ENCODE measurements at regions of chr3 and their contacts with region 1.

Region 1: GRCh38 chr3:138935848-138936740 is 10.8 kb downstream of the FOXL2 start:
- DNase-seq: peak; percentile 69
- H3K4me3 ChIP-seq: peak overlapping the region; percentile 19 to 54 (median 30)
- H3K27ac ChIP-seq: no peak overlapping the region
- H3K4me1 ChIP-seq: peaks cover 16 to 44% (median 31%) of the 10 kb centered on the region in 4 donors
- H3K27me3 ChIP-seq: peaks cover 75% of the 10 kb centered on the region
- CTCF ChIP-seq: peak; percentile 84 to 97 (median 93)
- EP300 ChIP-seq: no peak
- POLR2A ChIP-seq: no peak

Region 2: GRCh38 chr3:138417559-138417982 is 518.5 kb before region 1 on chr3:
- in situ Hi-C with region 1: loop called in 1 of 4 experiments (anchors 25 kb)
- intact Hi-C with region 1: no loop called
- DNase-seq: peak; percentile 76
- H3K4me3 ChIP-seq: no peak overlapping the region
- H3K27ac ChIP-seq: no peak overlapping the region
- H3K4me1 ChIP-seq: no peaks in the 10 kb centered on the region
- H3K27me3 ChIP-seq: peaks cover 4% of the 10 kb centered on the region
- CTCF ChIP-seq: peak; percentile 76 to 92 (median 90)
- EP300 ChIP-seq: no peak
- POLR2A ChIP-seq: no peak

Region 3: DNA sequence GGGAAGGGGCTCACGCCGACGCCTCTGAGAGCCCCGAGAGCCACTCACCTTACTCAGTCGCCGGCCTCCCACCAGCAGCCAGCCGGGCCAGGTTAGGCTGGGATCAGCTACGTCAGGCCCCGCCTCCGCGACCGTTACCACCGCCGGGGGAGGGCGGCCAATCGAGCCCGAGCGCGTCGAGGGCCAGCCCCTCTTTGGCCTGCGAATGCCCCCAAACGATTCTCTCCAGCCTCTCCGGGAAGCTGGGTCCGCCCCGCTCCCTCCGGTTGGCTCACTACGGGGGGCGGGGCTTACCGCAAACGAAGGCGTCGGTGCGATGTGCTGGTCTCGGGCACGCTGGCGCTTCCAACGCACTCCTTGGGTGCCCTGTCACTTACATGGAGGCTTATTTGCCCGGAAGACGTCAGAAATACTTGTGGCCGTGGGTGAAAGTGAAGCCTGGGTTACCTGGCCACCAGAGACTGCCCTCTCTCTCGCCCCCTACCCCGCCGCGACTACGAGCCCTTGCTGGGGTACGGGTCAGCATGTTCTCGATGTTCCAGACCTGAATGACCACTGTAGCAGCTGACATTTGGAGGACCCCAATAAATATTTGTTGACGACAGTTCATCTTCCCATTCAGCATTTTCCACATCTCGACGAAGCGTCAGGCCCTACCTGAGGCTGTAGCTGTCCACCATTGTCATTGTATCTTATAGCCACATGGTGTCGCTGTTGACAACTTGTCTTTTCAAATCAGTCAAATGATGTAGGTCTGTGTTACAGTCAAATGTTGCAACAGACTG is 341.8 kb before region 1 on chr3 and contains the start of gene CEP70:
- in situ Hi-C with region 1: loop called in 1 of 4 experiments (anchors 10 kb)
- intact Hi-C with region 1: no loop called
- DNase-seq: peak; percentile 96
- H3K4me3 ChIP-seq: peak within 1 kb of the TSS; percentile 49 to 75 (median 58)
- H3K27ac ChIP-seq: peak within 1 kb of the TSS; percentile 88 to 95 (median 92)
- H3K4me1 ChIP-seq: peaks cover 6 to 33% (median 15%) of the 10 kb centered on the region in 4 donors
- H3K27me3 ChIP-seq: no peaks in the 10 kb centered on the region
- CTCF ChIP-seq: peak; percentile 87 to 97 (median 89)
- EP300 ChIP-seq: no peak
- POLR2A ChIP-seq: peak; percentile 97
- total RNA-seq, gene CEP70: 4.1 to 46.8 (median 22.6) TPM

Region 4: DNA sequence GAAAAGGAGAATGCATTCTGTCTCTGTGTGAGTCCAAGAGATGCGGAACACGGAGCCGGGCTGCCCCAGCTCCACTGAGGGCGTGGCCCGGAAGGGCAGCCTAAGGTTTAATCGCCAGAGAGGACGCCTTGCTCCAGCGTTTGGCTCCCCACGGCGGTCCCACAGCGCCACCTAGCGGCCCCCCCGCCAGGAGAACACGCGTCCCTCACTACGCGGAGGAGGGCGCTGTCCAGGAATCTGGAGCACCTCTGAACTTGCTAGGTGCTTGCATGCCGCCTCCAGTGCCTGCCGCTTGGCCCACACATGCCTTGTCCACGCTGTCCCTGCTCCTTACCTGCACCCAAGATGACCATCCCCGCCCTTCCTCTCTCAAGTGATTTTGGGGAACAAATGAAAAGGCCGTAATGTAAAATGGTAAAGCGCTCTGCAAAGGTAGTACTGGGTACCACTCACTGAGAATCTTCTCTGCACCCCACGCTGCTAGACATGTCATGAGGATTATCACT is 393.3 kb after region 1 on chr3:
- in situ Hi-C with region 1: loop called (anchors 10 to 25 kb)
- intact Hi-C with region 1: loop called (anchors 10 kb)
- DNase-seq: peak; percentile 92
- H3K4me3 ChIP-seq: peak overlapping the region in 1 of 4 donors; percentile 13
- H3K27ac ChIP-seq: no peak overlapping the region
- H3K4me1 ChIP-seq: peaks cover 0 to 7% (median 2%) of the 10 kb centered on the region in 4 donors
- H3K27me3 ChIP-seq: peaks cover 28% of the 10 kb centered on the region
- CTCF ChIP-seq: peak; percentile 92 to 99 (median 97)
- EP300 ChIP-seq: no peak
- POLR2A ChIP-seq: no peak

Region 5: DNA sequence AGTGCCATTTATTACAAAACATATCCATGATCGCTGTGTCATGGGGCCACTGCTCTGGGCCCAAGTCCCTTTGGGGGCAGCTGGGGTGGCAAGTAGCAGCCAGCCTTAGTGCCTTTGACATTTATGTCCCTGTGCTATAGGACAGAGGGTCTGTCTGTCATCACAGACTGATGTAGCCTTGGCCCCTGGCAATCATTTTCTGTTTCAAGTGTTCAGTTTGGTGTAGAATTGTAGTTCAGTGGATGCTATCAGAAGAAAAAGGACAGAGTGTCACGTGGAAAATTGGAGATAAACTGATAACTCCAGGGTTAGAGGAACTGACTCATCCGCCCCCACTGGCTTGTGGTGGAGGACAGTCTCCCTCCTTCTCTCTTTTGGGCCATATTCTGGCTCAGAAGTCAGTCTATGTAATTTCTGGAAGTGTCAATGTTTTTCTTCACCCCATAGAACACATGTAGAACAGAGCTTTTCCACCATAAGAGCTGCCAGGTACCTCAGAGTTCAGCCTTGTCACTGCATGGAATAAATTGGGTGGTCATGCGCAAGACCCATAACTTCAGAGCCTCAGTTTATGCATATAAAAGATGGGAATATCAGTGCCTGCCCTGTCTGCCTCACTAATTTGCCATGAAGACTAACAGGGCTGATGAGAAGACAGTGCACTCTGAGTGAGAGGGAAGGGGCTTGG is 403.3 kb after region 1 on chr3:
- in situ Hi-C with region 1: loop called in 3 of 4 experiments (anchors 10 to 25 kb)
- intact Hi-C with region 1: no loop called
- DNase-seq: no peak
- H3K4me3 ChIP-seq: no peak overlapping the region
- H3K27ac ChIP-seq: no peak overlapping the region
- H3K4me1 ChIP-seq: peaks cover 0 to 1% (median under 1%) of the 10 kb centered on the region in 4 donors
- H3K27me3 ChIP-seq: peaks cover 8% of the 10 kb centered on the region
- CTCF ChIP-seq: no peak
- EP300 ChIP-seq: no peak
- POLR2A ChIP-seq: no peak